ENCODE measurements at regions of chr11 and their contacts with region 1.

Region 1: GRCh38 chr11:61392981-61393595 is 701 bp downstream of the TMEM216 start:
- DNase-seq: peak; percentile 55
- ATAC-seq: peak; percentile 16
- H3K4me3 ChIP-seq: peak overlapping the region; percentile 63 to 96 (median 87)
- H3K4me3 Mint-ChIP-seq: peak overlapping the region; percentile 98
- H3K27ac ChIP-seq: peak overlapping the region; percentile 68 to 86
- H3K27ac Mint-ChIP-seq: peak overlapping the region; percentile 97
- H3K4me1 ChIP-seq: peaks cover 13 to 19% of the 10 kb centered on the region in 2 donors
- H3K4me1 Mint-ChIP-seq: peaks cover 22% of the 10 kb centered on the region
- H3K27me3 ChIP-seq: no peaks in the 10 kb centered on the region
- H3K27me3 Mint-ChIP-seq: no peaks in the 10 kb centered on the region
- CTCF ChIP-seq: no peak

Region 2: GRCh38 chr11:61254403-61255025 is 138.6 kb before region 1 on chr11:
- CTCF ChIA-PET with region 1: interaction called, 21 read pairs
- POLR2A ChIA-PET with region 1: no interaction called
- intact Hi-C with region 1: loop called (anchors 10 kb)
- DNase-seq: peak; percentile 71
- ATAC-seq: peak; percentile 84
- H3K4me3 ChIP-seq: no peak overlapping the region
- H3K4me3 Mint-ChIP-seq: no peak overlapping the region
- H3K27ac ChIP-seq: no peak overlapping the region
- H3K27ac Mint-ChIP-seq: no peak overlapping the region
- H3K4me1 ChIP-seq: no peaks in the 10 kb centered on the region
- H3K4me1 Mint-ChIP-seq: no peaks in the 10 kb centered on the region
- H3K27me3 ChIP-seq: no peaks in the 10 kb centered on the region
- H3K27me3 Mint-ChIP-seq: no peaks in the 10 kb centered on the region
- CTCF ChIP-seq: peak; percentile 82

Region 3: GRCh38 chr11:61361686-61362541 is 31.2 kb before region 1 on chr11 and contains the starts of genes CYB561A3 and TMEM138:
- CTCF ChIA-PET with region 1: interaction called, 206 read pairs
- POLR2A ChIA-PET with region 1: interaction called, 8 read pairs
- intact Hi-C with region 1: no loop called
- DNase-seq: peak; percentile 94
- ATAC-seq: peak; percentile 72
- H3K4me3 ChIP-seq: peak within 1 kb of the TSS; percentile 86 to 99 (median 97)
- H3K4me3 Mint-ChIP-seq: peak within 1 kb of the TSS; percentile 99
- H3K27ac ChIP-seq: peak within 1 kb of the TSS; percentile 93
- H3K27ac Mint-ChIP-seq: peak within 1 kb of the TSS; percentile 98
- H3K4me1 ChIP-seq: peaks cover 44 to 50% of the 10 kb centered on the region in 2 donors
- H3K4me1 Mint-ChIP-seq: peaks cover 53% of the 10 kb centered on the region
- H3K27me3 ChIP-seq: no peaks in the 10 kb centered on the region
- H3K27me3 Mint-ChIP-seq: no peaks in the 10 kb centered on the region
- CTCF ChIP-seq: no peak
- total RNA-seq, gene CYB561A3: 248 and 259 TPM in 2 replicates
- total RNA-seq, gene TMEM138: 84.3 and 85.3 TPM in 2 replicates